ENCODE measurements at regions of chr10 and their contacts with region 1.

Region 1: GRCh38 chr10:6050801-6051445 is 11.2 kb downstream of the IL2RA start:
- DNase-seq: peak; percentile 81
- ATAC-seq: peak; percentile 68

Region 2: DNA sequence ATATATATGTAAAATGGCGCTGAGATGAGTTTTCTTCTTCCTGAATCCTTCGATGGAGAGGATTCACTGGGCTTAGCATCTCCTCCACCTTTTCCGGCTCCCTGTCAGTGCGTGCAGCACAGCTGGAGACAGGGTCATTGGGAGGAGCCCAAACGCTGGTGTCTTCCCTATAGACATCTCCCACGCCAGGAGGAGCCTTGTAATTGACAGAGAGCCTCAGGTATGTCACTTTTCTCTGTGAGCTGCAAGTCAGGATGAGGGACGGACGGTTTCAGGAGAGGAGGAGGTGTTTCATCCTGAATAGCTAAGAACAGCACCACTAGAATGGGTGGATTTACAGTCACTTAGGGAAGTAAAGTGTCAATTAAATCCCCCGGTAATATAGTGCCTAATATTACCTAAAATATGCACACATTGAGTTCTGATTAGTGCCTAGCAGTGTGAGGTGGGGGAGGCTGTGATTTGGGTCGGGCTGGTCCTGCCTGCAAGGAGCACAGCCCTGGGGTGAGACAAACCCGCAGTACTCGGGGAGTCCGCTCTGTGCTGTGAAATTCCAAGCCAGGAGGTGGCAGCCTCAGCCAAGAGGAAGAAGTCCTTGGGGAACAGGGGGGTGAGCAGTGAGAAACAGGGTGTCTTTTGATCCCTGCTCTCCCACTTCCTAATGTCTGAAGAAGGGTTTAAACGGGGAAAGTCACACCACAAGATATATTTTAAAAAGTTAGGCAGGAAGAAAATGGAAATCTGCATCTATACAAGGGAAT is 101.7 kb before region 1 on chr10:
- intact Hi-C with region 1: loop called (anchors 5 kb)
- DNase-seq: no peak
- ATAC-seq: peak; percentile 32

Region 3: DNA sequence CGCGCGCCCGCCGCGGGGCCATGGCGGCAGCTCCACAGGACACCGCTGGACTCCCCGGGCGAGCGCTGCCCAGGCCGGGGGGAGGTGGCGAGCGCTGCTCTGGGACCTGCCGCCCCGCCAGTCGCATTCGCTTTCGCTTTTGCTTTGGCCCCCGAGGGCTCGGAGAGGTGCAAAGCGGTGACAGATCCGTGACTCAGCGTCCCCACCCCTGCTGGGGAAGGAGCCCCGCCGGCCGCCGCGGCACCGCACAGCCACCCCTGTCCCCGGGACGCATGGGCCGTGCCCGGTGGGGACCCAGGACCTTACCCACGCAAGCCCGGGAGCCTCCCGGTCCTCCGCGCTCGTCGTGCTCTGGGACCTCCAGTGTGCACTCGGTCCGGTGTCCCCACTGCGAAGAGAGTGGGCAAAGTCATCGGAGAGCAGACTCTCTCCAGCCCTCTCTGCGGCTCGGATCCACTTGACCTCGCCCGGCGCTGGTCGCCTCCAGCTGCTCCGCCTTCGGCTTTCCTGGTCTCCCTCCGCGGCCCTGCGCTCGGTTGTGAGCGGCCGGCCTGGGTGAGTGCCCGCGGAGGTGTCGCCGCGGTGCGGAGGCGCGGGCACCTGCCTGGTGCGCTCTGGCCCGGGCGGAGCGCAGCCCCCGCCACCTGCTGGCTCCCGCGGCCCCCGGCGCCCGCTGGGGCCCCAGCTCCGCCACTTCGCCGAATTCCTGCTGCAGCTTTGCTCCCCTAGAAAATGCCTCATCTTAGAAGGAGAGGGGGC is 73.3 kb before region 1 on chr10 and contains the start of gene IL15RA:
- intact Hi-C with region 1: loop called (anchors 5 kb)
- DNase-seq: peak; percentile 87
- ATAC-seq: peak; percentile 65
- total RNA-seq, gene IL15RA: 11.6 TPM

Region 4: GRCh38 chr10:6014241-6014761 is 36.6 kb before region 1 on chr10:
- intact Hi-C with region 1: loop called (anchors 2 kb)
- DNase-seq: no peak
- ATAC-seq: peak; percentile 29

Region 5: DNA sequence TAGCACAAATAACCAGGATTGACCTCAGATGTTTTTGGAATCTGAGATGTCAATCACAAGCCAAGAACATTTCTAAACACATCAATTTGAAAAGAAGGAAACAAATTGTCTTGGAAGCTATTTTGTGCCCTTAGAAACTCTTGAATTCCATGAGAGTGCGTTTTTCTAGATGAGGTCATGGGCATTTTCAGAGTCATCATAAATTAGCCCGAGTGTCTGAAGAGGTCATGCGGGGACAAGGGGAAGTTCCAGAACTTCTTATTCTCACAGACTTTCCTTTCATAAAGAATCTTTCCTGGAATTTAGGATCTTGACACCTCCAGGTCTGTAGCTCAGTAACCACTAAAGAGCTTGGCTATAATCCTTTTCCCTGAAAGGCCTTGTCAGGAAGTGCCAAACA is 17.0 kb before region 1 on chr10:
- intact Hi-C with region 1: no loop called
- DNase-seq: no peak
- ATAC-seq: peak; percentile 54

Region 6: DNA sequence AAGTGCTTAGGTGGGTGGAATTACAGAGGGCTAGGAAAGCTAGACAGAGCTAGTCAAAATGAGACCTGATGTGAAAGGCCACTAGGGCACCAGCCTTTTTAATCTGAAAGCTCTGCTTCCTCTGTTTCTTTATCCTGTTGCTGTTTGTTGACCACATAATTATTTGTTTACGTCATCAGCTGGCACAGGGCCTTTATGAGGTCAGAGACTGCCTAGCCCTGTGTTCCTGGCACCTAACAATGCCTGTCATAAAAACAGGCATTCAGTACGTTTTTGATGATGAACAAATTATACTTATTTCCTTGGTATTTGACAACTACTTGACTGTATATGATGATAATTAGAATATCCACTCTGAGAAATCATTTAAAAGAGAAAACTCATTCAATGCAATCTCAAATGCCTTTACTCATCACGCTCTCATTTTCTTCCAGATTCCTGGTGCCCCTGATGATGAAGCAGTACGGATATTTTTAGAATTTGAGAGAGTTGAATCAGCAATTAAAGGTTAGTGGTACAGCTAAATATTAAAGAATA is 64.0 kb after region 1 on chr10:
- intact Hi-C with region 1: no loop called
- DNase-seq: no peak
- ATAC-seq: no peak

Measured in Right ventricle myocardium inferior (tissue), 1 donor.